ENCODE measurements at regions of chr1 and their contacts with region 1.

Region 1: GRCh38 chr1:78676347-78676982 is 26.8 kb downstream of the IFI44 start:
- DNase-seq: peak in 32 of 42 donors; percentile 20 to 88 (median 58)

Region 2: GRCh38 chr1:78132174-78132947 is 544.1 kb before region 1 on chr1:
- intact Hi-C with region 1: loop called (anchors 10 kb)
- DNase-seq: no peak

Region 3: GRCh38 chr1:78385744-78386462 is 290.6 kb before region 1 on chr1:
- intact Hi-C with region 1: no loop called
- DNase-seq: no peak

Region 4: GRCh38 chr1:78561856-78562255 is 114.6 kb before region 1 on chr1:
- intact Hi-C with region 1: no loop called
- DNase-seq: no peak

Region 5: GRCh38 chr1:78617615-78618026 is 58.8 kb before region 1 on chr1:
- intact Hi-C with region 1: loop called (anchors 2 kb)
- DNase-seq: peak; percentile 23 to 90 (median 74)

Measured in head of caudate nucleus (tissue), 42 donors.